ENCODE measurements at regions of chr18 and their contacts with region 1.

Region 1: GRCh38 chr18:24894880-24895279 is 434.4 kb downstream of the HRH4 start:
- DNase-seq: no peak
- ATAC-seq: no peak
- H3K4me3 ChIP-seq: no peak overlapping the region
- H3K27ac ChIP-seq: no peak overlapping the region
- H3K4me1 ChIP-seq: no peaks in the 10 kb centered on the region
- H3K27me3 ChIP-seq: no peaks in the 10 kb centered on the region
- CTCF ChIP-seq: no peak
- POLR2A ChIP-seq: no peak

Region 2: GRCh38 chr18:24827501-24827900 is 67.4 kb before region 1 on chr18:
- intact Hi-C with region 1: loop called (anchors 10 kb)
- DNase-seq: no peak
- ATAC-seq: no peak
- H3K4me3 ChIP-seq: no peak overlapping the region
- H3K27ac ChIP-seq: no peak overlapping the region
- H3K4me1 ChIP-seq: peaks cover 4% of the 10 kb centered on the region
- H3K27me3 ChIP-seq: no peaks in the 10 kb centered on the region
- CTCF ChIP-seq: no peak
- POLR2A ChIP-seq: no peak

Region 3: DNA sequence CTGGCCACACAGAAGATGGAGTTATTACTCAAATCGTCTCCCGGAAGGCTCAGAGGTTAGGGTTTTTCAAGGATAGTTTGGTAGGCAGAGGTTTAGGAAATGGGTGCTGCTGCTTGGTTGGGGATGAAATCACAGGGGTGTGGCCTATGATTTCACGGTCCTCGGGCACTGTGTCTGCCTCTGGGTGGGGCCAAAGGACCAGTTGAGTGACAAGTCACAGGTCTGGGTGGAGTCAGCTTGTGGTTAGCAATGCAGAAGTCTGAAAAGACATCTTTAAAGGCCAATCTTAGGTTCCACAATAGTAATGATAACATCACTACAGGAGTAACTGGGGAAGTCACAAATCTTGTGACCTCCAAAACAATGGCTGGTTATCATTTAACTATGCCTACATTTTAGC is 69.3 kb after region 1 on chr18:
- intact Hi-C with region 1: no loop called
- DNase-seq: no peak
- ATAC-seq: no peak
- H3K4me3 ChIP-seq: no peak overlapping the region
- H3K27ac ChIP-seq: no peak overlapping the region
- H3K4me1 ChIP-seq: no peaks in the 10 kb centered on the region
- H3K27me3 ChIP-seq: no peaks in the 10 kb centered on the region
- CTCF ChIP-seq: no peak
- POLR2A ChIP-seq: no peak